Panc1 (cell line): ENCODE measurements at regions of chr4 and their contacts with region 1.

Region 1: DNA sequence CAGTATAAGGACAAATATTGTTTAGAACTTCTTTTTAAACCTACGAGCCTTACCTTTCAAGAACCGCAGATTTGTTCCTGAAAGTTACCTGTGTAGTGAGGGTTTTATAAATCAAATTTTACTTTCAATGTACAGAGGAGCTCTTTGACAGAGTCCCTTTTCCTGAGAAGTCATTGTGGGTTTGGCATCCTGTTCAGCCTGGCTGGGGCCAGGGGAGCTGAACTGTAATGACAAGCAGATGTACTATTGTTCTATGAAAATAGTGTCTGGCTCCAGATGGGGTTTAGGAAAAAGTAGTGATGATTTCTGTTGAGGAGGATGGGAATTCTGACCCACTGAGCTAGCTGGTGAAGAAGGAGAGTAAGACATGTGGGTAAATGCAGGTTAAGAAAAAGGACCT is 196.2 kb upstream of the PGRMC2 start:
- DNase-seq: no peak
- ATAC-seq: no peak
- H3K4me3 ChIP-seq: no peak overlapping the region
- H3K27ac ChIP-seq: no peak overlapping the region
- H3K4me1 ChIP-seq: no peaks in the 10 kb centered on the region
- H3K27me3 ChIP-seq: no peaks in the 10 kb centered on the region
- CTCF ChIP-seq: no peak

Region 2: DNA sequence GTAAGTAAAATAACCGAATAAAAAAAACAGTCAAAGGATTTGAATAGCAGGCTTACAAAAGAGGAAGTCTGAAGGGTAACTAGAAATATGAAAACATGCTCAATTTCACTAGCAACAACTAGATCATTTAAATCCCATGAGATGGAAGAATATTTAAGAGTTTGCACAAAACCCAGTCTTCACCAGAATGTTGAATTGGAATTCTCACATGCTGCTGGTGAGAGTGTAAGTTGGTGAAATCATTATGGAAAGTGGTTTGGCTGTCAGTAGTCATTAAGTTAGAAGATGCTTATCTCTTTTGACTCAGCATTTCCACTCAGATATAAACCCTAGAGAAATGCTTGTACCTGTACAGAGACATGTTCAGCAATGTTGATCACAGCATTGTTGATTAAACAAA is 306.3 kb before region 1 on chr4:
- CTCF ChIA-PET with region 1: no interaction called
- POLR2A ChIA-PET with region 1: no interaction called
- in situ Hi-C with region 1: no loop called
- intact Hi-C with region 1: no loop called
- DNase-seq: no peak
- ATAC-seq: no peak
- H3K4me3 ChIP-seq: no peak overlapping the region
- H3K27ac ChIP-seq: no peak overlapping the region; the same call in 1 of the 2 replicates
- H3K4me1 ChIP-seq: no peaks in the 10 kb centered on the region; the same call in 1 of the 2 replicates
- H3K27me3 ChIP-seq: no peaks in the 10 kb centered on the region
- CTCF ChIP-seq: no peak

Region 3: GRCh38 chr4:128583753-128584712 is 100.2 kb after region 1 on chr4:
- CTCF ChIA-PET with region 1: interaction called, 20 read pairs
- POLR2A ChIA-PET with region 1: no interaction called
- in situ Hi-C with region 1: no loop called
- intact Hi-C with region 1: no loop called
- DNase-seq: no peak
- ATAC-seq: no peak
- H3K4me3 ChIP-seq: no peak overlapping the region
- H3K27ac ChIP-seq: no peak overlapping the region
- H3K4me1 ChIP-seq: no peaks in the 10 kb centered on the region
- H3K27me3 ChIP-seq: no peaks in the 10 kb centered on the region
- CTCF ChIP-seq: no peak